GM18951 (cell line): ENCODE measurements at regions of chr13 and their contacts with region 1.

Region 1: GRCh38 chr13:112752711-112753541 is 63.1 kb downstream of the ATP11A start:
- POLR2A ChIP-seq: no peak

Region 2: GRCh38 chr13:112003396-112003795 is 749.5 kb before region 1 on chr13:
- in situ Hi-C with region 1: loop called (anchors 10 kb)
- POLR2A ChIP-seq: no peak

Region 3: DNA sequence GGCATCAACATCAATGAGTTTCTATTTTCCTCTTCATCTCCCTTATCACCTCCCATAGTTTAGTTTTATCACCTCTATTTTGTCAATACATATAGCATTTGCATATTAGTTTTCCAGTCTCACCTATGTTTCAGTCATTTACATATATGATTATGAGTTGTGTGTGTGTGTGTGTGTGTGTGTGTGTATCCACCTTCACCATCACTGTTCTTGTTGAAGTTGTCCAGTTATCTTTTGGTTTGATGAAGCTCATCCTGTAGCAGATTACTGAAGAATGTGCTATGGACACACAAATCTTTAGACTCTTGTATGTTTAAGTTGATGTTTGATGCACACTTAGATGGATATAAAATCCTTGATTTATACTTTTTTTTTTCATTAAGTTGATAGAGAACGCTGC is 336.3 kb before region 1 on chr13:
- in situ Hi-C with region 1: no loop called
- POLR2A ChIP-seq: no peak

Region 4: GRCh38 chr13:112592647-112593046 is 160.3 kb before region 1 on chr13:
- in situ Hi-C with region 1: no loop called
- POLR2A ChIP-seq: no peak

Region 5: GRCh38 chr13:113110048-113110851 is 357.3 kb after region 1 on chr13:
- in situ Hi-C with region 1: no loop called
- POLR2A ChIP-seq: no peak